ENCODE measurements at regions of chr6 and their contacts with region 1.

Region 1: GRCh38 chr6:150813319-150813992 is 52.0 kb upstream of the MTHFD1L start:
- DNase-seq: no peak

Region 2: GRCh38 chr6:150079604-150080003 is 733.9 kb before region 1 on chr6:
- intact Hi-C with region 1: loop called in 1 of 2 experiments (anchors 10 kb)
- DNase-seq: no peak

Region 3: GRCh38 chr6:150417899-150418826 is 395.3 kb before region 1 on chr6:
- intact Hi-C with region 1: loop called in 1 of 2 experiments (anchors 5 kb)
- DNase-seq: no peak

Region 4: GRCh38 chr6:150426198-150426597 is 387.3 kb before region 1 on chr6:
- intact Hi-C with region 1: loop called in 1 of 2 experiments (anchors 5 kb)
- DNase-seq: no peak